ENCODE measurements at regions of chr9 and their contacts with region 1.

Region 1: GRCh38 chr9:2570615-2571479 is 50.7 kb upstream of the VLDLR start:
- DNase-seq: peak; percentile 90 to 97
- H3K4me3 ChIP-seq: no peak overlapping the region; the same call in 1 of the 2 replicates
- H3K27ac ChIP-seq: peak overlapping the region; percentile 77
- H3K4me1 ChIP-seq: peaks cover 61% of the 10 kb centered on the region
- H3K27me3 ChIP-seq: no peaks in the 10 kb centered on the region
- CTCF ChIP-seq: no peak

Region 2: GRCh38 chr9:1554081-1555035 is 1016.5 kb before region 1 on chr9:
- CTCF ChIA-PET with region 1: no interaction called
- POLR2A ChIA-PET with region 1: no interaction called
- intact Hi-C with region 1: no loop called
- DNase-seq: no peak
- H3K4me3 ChIP-seq: no peak overlapping the region
- H3K27ac ChIP-seq: no peak overlapping the region
- H3K4me1 ChIP-seq: no peaks in the 10 kb centered on the region
- H3K27me3 ChIP-seq: no peaks in the 10 kb centered on the region
- CTCF ChIP-seq: no peak

Region 3: DNA sequence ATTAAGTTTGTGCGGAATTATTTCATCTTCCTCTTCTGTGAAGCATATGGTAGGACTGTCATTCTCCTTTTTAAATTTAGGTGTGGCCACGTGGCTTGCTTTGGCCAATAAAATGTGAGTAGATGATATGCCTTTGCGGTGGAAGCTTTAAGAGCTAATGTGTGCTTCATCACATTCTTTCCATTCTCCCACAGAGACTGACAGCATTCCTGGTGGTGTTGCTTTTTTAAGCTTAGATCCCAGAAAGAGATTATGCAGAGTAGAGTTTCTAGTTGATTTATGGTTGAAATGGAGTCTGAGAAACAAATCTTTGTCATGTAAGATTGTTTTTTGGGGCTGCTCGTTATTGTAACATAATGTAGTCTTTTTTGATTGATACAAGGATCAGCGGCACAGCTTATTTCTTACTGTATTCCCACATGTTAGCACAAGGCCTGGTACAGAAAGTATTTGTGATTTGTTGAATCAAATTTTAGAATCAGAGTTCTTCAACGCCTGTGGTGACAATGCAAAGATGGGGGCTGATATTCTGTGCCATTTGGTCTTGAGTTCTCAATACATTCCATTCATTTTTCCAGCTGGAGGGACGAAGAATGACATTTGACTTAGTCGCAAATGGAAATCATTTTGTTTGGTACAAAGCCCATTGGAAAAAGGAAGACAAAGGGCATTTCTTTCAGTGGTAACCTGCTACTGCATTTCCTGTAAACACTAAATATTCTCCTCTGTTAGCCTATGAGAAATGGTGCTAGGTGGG is 159.2 kb before region 1 on chr9:
- CTCF ChIA-PET with region 1: no interaction called
- POLR2A ChIA-PET with region 1: no interaction called
- intact Hi-C with region 1: loop called (anchors 5 kb)
- DNase-seq: peak; percentile 18 to 38
- H3K4me3 ChIP-seq: no peak overlapping the region
- H3K27ac ChIP-seq: no peak overlapping the region
- H3K4me1 ChIP-seq: no peaks in the 10 kb centered on the region
- H3K27me3 ChIP-seq: no peaks in the 10 kb centered on the region
- CTCF ChIP-seq: no peak

Region 4: DNA sequence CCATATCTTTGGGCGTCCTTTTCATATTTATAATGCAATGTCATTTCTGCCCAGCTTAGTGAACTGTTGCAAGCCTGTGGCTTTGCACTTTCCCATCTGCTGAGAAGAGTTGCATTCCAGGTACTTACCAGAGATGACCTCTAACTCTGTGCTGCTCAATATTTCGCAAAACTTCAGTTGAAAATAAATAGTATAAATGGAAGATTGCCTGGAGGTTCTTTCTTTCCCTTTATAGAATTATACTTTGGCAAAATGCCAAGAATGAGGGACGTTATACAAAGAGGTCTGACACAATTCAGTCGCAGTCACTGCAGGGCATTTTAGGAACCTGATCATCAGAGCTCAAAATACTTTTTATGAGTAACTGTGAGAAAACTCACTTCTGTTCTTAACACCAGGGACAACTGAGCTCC is 31.9 kb after region 1 on chr9:
- CTCF ChIA-PET with region 1: no interaction called
- POLR2A ChIA-PET with region 1: no interaction called
- intact Hi-C with region 1: loop called (anchors 2 kb)
- DNase-seq: peak; percentile 8 to 83
- H3K4me3 ChIP-seq: no peak overlapping the region
- H3K27ac ChIP-seq: peak overlapping the region; percentile 35; the same call in 1 of the 2 replicates
- H3K4me1 ChIP-seq: peaks cover 24% of the 10 kb centered on the region
- H3K27me3 ChIP-seq: no peaks in the 10 kb centered on the region
- CTCF ChIP-seq: no peak

Region 5: GRCh38 chr9:2800393-2801179 is 229.7 kb after region 1 on chr9:
- CTCF ChIA-PET with region 1: no interaction called
- POLR2A ChIA-PET with region 1: no interaction called
- intact Hi-C with region 1: no loop called
- DNase-seq: no peak
- H3K4me3 ChIP-seq: no peak overlapping the region
- H3K27ac ChIP-seq: no peak overlapping the region
- H3K4me1 ChIP-seq: no peaks in the 10 kb centered on the region
- H3K27me3 ChIP-seq: no peaks in the 10 kb centered on the region
- CTCF ChIP-seq: no peak

Region 6: GRCh38 chr9:2933165-2934095 is 362.6 kb after region 1 on chr9:
- CTCF ChIA-PET with region 1: no interaction called
- POLR2A ChIA-PET with region 1: no interaction called
- intact Hi-C with region 1: no loop called
- DNase-seq: no peak
- H3K4me3 ChIP-seq: no peak overlapping the region
- H3K27ac ChIP-seq: no peak overlapping the region
- H3K4me1 ChIP-seq: no peaks in the 10 kb centered on the region
- H3K27me3 ChIP-seq: peaks cover 19% of the 10 kb centered on the region; the same call in 1 of the 2 replicates
- CTCF ChIP-seq: no peak

Measured in PC-9 (cell line).